Dorsolateral prefrontal cortex (tissue), 120 donors: ENCODE measurements at regions of chr4 and their contacts with region 1.

Region 1: DNA sequence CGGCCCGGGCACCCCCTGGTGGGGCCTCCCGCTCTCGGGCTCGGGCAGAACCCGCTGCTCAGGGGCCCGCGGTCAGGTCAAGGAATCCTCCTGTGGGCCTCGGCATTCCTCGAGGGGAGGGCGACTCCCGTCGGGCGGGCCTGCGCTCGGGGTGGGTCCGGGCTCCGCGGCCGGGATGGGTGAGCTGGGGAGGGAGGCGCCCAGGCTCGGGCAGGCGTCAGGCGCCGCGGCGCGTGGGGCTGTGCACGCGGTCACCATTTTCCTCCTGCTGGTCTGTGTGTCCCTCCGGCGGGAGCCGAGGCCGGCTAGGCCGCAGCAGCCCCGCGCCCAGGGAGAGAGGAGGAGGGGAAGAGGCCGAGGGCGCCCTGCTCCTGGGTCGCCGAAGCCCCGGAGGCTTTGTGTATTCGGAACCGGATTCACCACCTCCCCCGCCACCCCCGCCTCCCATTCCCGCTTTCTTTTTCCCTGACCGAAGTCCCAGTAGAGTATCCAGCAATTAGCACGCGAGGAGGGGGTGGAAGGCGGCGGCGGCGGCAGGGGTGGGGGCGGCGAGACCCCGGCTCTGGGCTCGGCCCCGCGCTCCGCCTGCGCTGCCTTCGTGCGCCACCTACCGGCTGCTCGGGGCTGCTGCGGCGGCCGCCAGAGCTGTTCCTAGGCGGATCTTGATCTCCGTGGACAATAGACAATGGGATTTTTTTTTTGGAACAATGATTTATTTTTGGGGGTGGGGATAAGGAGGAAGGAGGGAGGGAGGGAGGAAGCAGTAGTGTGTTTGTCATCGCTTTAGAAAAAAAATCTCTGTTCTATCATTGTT is 99.0 kb upstream of the MAML3 start:
- DNase-seq: peak; percentile 75 to 85 (median 78)
- H3K4me3 ChIP-seq: peak overlapping the region; percentile 53 to 95 (median 74)
- H3K27ac ChIP-seq: peak overlapping the region; percentile 74 to 98 (median 95)
- H3K27me3 ChIP-seq: no peaks in the 10 kb centered on the region
- CTCF ChIP-seq: peak; percentile 74 to 98 (median 92)

Region 2: GRCh38 chr4:139656614-139657486 is 596.1 kb before region 1 on chr4:
- intact Hi-C with region 1: loop called (anchors 5 to 10 kb)
- DNase-seq: peak in 5 of 10 donors; percentile 51 to 66 (median 62)
- H3K4me3 ChIP-seq: no peak overlapping the region
- H3K27ac ChIP-seq: peak overlapping the region in 3 of 59 donors; percentile 15 to 70 (median 21)
- H3K27me3 ChIP-seq: no peaks in the 10 kb centered on the region
- CTCF ChIP-seq: peak; percentile 52 to 84 (median 74)

Region 3: GRCh38 chr4:140012688-140013486 is 240.1 kb before region 1 on chr4:
- intact Hi-C with region 1: loop called in 1 of 2 experiments (anchors 5 kb)
- DNase-seq: peak in 5 of 10 donors; percentile 25 to 73 (median 52)
- H3K4me3 ChIP-seq: peak overlapping the region in 11 of 59 donors; percentile 4 to 51 (median 18)
- H3K27ac ChIP-seq: no peak overlapping the region
- H3K27me3 ChIP-seq: no peaks in the 10 kb centered on the region
- CTCF ChIP-seq: peak in 55 of 56 donors; percentile 22 to 84 (median 63)

Region 4: DNA sequence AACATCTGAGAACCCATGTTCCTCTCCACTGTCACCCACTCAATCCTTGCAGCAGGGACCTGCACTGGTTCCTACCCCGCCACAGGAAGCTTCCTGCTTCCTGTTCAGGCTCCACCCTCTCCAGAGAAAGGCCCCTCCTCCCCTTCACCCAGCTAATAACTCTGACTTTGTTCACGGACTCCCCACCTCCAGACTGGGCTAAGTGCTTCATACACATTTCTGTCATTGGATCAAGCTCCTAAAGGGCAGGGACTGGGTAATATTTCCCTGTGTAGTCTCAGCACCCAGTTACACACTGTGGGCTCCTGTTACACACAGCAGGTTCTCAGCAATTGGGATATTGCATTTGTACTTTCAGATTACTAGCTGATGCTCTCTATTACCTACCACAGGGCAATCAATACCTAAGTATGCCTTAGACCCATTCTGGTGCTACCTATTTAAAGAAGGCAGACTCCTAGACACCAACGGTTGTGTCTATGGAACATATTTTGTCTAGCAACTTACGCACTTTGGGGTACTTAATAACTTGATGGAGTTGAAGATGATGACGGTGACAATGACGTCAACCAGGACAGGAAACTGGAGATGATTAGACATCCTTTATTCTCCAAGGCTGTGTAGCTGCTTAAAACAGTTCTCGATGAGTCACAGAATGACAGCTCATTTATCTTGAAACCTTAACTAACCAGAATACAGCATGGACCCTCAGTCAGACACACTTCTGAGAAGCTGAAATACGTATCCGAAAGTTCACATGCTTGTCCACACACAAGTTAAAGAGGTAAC is 157.1 kb before region 1 on chr4:
- intact Hi-C with region 1: loop called in 1 of 2 experiments (anchors 2 kb)
- DNase-seq: no peak
- H3K4me3 ChIP-seq: peak overlapping the region in 6 of 59 donors; percentile 1 to 44 (median 38)
- H3K27ac ChIP-seq: peak overlapping the region in 47 of 59 donors; percentile 3 to 85 (median 65)
- H3K27me3 ChIP-seq: no peaks in the 10 kb centered on the region
- CTCF ChIP-seq: no peak

Region 5: DNA sequence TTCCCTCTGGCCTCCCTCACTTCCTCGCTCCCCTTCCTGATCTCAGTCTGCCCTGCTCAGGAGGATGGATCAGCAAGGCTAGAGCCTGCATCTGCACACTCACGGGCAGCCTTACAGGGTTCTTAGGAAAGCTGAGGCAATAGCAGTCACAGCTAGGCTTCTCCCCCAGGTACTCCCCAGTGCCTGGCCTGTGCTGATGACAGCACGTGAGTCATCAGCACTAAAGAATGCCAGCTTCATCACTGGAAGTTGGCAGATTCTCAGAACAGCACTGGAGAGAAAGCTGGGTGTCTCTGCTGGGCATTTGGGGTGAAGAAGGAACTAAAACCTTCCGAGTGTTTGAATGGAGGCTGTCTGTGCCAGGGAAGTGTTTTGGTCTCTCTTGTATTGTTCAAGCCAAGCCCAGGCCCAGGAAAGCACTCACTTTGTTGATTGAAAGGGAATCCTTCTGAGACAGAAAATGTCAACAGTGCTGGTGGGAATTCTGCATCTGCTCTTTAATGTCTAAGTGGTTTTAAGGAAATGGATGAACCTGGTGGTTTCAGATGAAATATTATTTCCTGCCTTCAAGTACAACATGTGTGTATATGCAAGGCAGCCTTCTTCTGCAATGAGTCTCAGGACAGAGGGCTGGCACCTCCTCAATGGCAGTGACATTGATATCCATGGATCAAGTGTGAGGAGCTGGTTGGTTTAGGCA is 47.5 kb after region 1 on chr4:
- intact Hi-C with region 1: loop called (anchors 2 to 5 kb)
- DNase-seq: peak in 1 of 10 donors; percentile 46
- H3K4me3 ChIP-seq: no peak overlapping the region
- H3K27ac ChIP-seq: peak overlapping the region in 54 of 59 donors; percentile 10 to 95 (median 66)
- H3K27me3 ChIP-seq: no peaks in the 10 kb centered on the region
- CTCF ChIP-seq: no peak

Region 6: GRCh38 chr4:140326395-140326993 is 73.5 kb after region 1 on chr4:
- intact Hi-C with region 1: loop called (anchors 1 to 5 kb)
- DNase-seq: peak in 3 of 10 donors; percentile 27 to 66 (median 60)
- H3K4me3 ChIP-seq: no peak overlapping the region
- H3K27ac ChIP-seq: no peak overlapping the region
- H3K27me3 ChIP-seq: no peaks in the 10 kb centered on the region
- CTCF ChIP-seq: peak; percentile 7 to 90 (median 72)

Region 7: GRCh38 chr4:140523857-140524742 is 271.2 kb after region 1 on chr4 and contains the start of gene ELMOD2:
- intact Hi-C with region 1: no loop called
- DNase-seq: peak; percentile 98 to 100 (median 99)
- H3K4me3 ChIP-seq: peak within 1 kb of the TSS; percentile 66 to 99 (median 91)
- H3K27ac ChIP-seq: peak within 1 kb of the TSS in 53 of 59 donors; percentile 8 to 93 (median 71)
- H3K27me3 ChIP-seq: no peaks in the 10 kb centered on the region
- CTCF ChIP-seq: peak; percentile 70 to 99 (median 93)
- total RNA-seq, gene ELMOD2: 12.8 to 30.1 (median 20.9) TPM